Psoas muscle (tissue), 8 donors: ENCODE measurements at regions of chr15 and their contacts with region 1.

Region 1: DNA sequence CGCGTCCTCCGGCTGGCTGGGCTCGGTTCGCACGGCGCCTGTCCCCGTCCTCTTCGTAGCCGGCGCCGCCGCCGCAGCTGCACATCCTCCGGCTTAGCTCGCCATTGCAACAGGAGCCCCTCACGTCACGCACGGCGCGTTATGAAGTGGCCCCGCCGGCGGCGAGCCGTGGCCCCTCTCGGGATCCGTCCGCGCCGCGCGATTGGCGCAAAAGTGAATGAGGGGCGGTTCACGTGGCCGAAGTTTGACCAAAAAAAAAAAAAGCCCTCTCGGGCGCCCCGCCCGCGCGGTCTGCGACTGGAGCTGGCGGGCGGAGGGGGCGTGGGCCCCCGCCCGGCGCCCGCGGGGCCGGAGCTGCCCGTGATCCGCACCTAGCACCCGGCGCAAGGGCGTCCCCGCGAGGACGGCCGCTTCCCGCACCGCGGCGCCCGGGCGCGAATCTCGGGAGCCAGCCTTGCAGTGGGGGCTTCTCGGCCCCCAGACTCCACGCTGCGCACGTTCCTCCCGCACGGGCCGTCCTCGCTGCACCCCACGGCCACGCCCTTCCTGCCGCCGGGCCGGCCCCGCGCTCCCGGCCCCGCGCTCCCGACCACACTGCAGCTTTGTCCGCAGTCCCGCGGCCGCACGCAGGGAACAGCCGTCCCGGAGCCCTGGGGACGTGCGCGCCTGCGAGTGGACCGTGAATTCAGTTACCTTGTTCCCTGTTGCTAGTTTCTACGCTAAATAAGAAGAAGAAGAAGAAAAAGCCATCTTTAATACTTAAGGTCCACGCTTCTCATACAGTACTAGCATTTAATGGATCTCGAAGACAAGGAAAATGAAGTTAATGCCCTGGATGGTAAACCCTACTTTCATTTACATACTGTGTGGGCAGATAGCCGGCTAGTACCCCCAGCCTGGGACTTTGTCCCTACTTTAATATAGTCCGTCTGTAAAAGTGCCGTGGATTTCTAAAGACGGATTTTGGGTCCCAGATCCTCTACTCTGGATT is at the start of gene CHSY1:
- DNase-seq: peak; percentile 96 to 97
- ATAC-seq: peak; percentile 90 to 94 (median 92)
- H3K4me3 ChIP-seq: peak within 1 kb of the TSS; percentile 75
- H3K27ac ChIP-seq: peak within 1 kb of the TSS; percentile 84
- H3K4me1 ChIP-seq: peaks cover 34% of the 10 kb centered on the region
- H3K27me3 ChIP-seq: no peaks in the 10 kb centered on the region
- CTCF ChIP-seq: peak; percentile 22
- total RNA-seq, gene CHSY1: 6.7 to 11.4 (median 8.5) TPM

Region 2: DNA sequence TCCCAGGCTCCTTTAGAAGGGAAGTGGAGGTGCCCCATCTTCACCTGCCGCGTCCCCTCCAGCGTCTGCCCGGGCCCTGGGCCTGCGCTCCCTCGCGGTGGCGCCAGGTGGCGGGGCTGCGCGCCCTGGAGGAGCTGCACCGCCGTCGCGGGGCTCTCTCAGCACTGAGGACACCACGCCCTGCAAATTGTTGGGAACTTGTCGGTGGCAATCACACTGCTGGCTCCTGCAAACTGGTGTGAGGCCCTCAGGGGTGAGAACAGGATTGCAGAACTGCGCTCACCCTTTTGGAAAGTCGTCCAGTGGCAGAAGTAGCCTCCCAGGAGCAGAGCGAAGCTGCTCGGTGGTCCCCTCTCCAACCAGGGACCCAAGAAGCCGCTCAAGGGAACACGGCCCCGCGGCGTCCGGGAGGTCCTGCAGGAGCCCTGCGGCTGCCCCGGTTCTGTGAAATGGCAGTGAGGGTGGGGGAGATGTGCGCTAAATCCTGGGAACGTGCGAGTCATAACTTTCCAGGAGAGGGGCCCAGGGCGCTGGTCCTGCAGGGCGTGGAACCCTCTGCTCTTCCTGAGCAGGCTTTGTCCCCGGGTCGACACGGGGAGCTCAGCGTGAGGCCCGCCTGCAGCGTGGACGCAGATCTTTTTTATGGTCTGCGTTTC is 334.0 kb before region 1 on chr15:
- intact Hi-C with region 1: loop called in 1 of 2 experiments (anchors 10 kb)
- DNase-seq: peak; percentile 82 to 89
- ATAC-seq: peak; percentile 85 to 95 (median 94)
- H3K4me3 ChIP-seq: peak overlapping the region; percentile 83
- H3K27ac ChIP-seq: peak overlapping the region; percentile 67
- H3K4me1 ChIP-seq: peaks cover 14% of the 10 kb centered on the region
- H3K27me3 ChIP-seq: peaks cover 0 to 14% (median 1%) of the 10 kb centered on the region in 3 donors
- CTCF ChIP-seq: peak; percentile 89

Region 3: GRCh38 chr15:101127506-101128076 is 124.5 kb before region 1 on chr15:
- intact Hi-C with region 1: loop called in 1 of 2 experiments (anchors 10 kb)
- DNase-seq: peak; percentile 79 to 85
- ATAC-seq: peak; percentile 64 to 95 (median 88)
- H3K4me3 ChIP-seq: no peak overlapping the region
- H3K27ac ChIP-seq: peak overlapping the region; percentile 56
- H3K4me1 ChIP-seq: peaks cover 8% of the 10 kb centered on the region
- H3K27me3 ChIP-seq: peaks cover 0 to 4% (median 0%) of the 10 kb centered on the region in 3 donors
- CTCF ChIP-seq: no peak

Region 4: DNA sequence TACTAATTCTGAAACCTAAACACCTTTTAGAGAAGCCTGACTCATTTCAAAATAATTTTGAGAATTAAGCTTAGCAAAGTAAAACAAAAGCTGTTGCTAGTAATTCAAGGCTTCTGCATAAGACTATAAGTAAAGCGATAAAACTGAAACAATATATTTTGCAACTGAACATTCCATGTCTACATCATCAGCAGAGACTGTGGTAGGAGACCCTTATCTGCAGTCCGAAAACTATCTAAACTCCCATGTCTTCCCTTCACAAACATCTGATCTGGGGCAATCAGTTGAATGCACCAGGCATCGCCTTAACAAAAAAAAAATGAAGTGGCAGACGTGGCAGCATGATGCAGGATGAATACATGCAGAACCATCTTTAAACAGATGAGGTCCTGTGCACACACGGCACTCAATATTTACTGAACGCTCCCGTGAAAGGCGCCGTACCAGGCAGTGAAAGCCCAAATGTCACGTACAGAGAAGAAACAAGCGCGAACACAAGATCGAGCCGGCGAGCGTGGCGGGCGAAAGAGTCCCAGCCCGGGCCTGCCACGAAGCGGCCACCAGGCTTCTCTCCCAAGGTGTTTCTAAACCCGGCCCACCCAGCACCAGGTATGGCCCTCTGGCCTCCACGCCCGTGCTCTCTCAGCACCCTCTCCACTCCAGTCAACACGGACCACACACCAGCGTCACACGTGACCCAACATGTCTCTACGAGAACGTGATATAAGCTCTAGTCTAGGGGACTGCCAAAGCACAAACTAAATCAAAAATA is 63.3 kb before region 1 on chr15:
- intact Hi-C with region 1: loop called (anchors 5 to 10 kb)
- DNase-seq: no peak
- ATAC-seq: peak; percentile 31 to 59 (median 48)
- H3K4me3 ChIP-seq: peak overlapping the region; percentile 57
- H3K27ac ChIP-seq: peak overlapping the region; percentile 62
- H3K4me1 ChIP-seq: peaks cover 43% of the 10 kb centered on the region
- H3K27me3 ChIP-seq: no peaks in the 10 kb centered on the region
- CTCF ChIP-seq: no peak